Activated CD4-positive, alpha-beta memory T cell treated with anti-CD3 and anti-CD28 coated beads for 36 hours (primary cell): ENCODE measurements at regions of chr7 and their contacts with region 1.

Region 1: GRCh38 chr7:150514748-150515222 is at the start of gene GIMAP7:
- DNase-seq: peak; percentile 73
- H3K4me3 Mint-ChIP-seq: peak within 1 kb of the TSS; percentile 94
- H3K27ac Mint-ChIP-seq: peak within 1 kb of the TSS; percentile 97
- H3K4me1 Mint-ChIP-seq: peaks cover 52% of the 10 kb centered on the region
- H3K27me3 Mint-ChIP-seq: no peaks in the 10 kb centered on the region
- total RNA-seq, gene GIMAP7: 42.5 to 44.1 TPM

Region 2: DNA sequence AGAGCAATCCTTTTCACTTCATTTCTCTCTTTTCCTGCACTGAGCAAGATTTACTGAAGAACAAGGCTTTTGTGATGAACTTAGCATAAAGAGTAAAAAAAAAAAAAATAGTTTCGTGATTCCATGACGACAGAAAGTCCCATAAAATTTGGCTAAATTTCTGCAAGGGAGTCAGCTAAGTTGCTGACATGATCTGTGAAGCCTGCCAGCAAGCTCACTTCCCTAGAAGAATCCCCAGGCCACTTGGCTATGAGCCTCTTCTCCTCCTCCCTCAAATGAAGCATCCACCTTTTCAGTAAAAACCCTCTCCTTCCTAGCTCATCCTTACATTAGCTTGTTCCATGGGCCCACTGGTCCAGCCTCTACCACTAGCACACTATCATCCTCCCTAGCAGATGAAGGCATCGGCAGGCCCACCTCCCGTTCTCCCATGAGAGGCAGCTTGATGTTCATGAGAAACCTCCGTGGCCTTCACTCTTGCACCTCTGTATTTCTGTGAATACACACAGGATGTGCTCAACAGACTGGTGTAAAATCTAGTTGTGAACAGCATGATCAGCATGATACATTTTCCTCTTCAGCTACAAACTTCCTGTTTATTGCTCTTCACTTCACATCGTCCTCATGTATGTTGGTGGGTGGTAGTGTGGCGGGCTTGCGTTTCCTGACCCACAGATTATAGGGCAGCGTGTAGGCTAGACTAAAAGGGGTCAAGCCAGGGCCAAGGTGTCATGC is 33.4 kb before region 1 on chr7:
- CTCF ChIA-PET with region 1: interaction called, 5 read pairs
- POLR2A ChIA-PET with region 1: interaction called, 13 read pairs
- intact Hi-C with region 1: loop called (anchors 5 kb)
- DNase-seq: peak; percentile 63
- H3K4me3 Mint-ChIP-seq: peak overlapping the region; percentile 83
- H3K27ac Mint-ChIP-seq: peak overlapping the region; percentile 99
- H3K4me1 Mint-ChIP-seq: peaks cover 94% of the 10 kb centered on the region
- H3K27me3 Mint-ChIP-seq: no peaks in the 10 kb centered on the region

Region 3: GRCh38 chr7:150538259-150538658 is 23.5 kb after region 1 on chr7:
- CTCF ChIA-PET with region 1: no interaction called
- POLR2A ChIA-PET with region 1: no interaction called
- intact Hi-C with region 1: no loop called
- DNase-seq: no peak
- H3K4me3 Mint-ChIP-seq: no peak overlapping the region
- H3K27ac Mint-ChIP-seq: no peak overlapping the region
- H3K4me1 Mint-ChIP-seq: peaks cover 5% of the 10 kb centered on the region
- H3K27me3 Mint-ChIP-seq: no peaks in the 10 kb centered on the region

Region 4: DNA sequence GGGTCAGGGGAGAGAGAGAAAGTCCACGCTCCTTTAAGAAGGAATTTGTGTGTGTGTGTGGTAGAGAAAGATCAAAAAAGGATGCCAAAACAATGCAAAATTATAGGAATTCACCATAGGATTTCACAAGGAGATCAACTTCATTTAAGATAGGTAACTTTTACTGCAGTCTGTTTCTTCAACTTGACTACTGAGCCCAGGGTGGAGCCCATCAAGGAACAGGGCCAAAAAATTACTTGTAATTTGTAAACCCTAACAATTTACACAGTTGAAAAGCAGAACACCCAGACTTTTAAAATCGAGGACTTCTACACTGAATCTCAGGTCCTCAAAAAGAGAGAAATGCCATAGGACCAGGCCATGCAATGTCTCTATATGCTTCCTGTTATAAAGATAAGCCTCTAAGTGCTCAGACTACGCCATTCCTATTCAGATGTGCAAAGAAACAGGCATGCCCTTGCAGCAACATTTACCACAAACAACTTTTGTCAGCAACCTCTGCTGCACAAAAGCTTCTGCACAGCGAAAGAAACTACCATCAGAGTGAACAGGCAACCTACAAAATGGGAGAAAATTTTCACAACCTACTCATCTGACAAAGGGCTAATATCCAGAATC is 41.8 kb after region 1 on chr7:
- CTCF ChIA-PET with region 1: interaction called, 3 read pairs
- POLR2A ChIA-PET with region 1: interaction called, 5 read pairs
- intact Hi-C with region 1: loop called (anchors 2 kb)
- DNase-seq: no peak
- H3K4me3 Mint-ChIP-seq: peak overlapping the region; percentile 58
- H3K27ac Mint-ChIP-seq: peak overlapping the region; percentile 83
- H3K4me1 Mint-ChIP-seq: peaks cover 78% of the 10 kb centered on the region
- H3K27me3 Mint-ChIP-seq: no peaks in the 10 kb centered on the region

Region 5: GRCh38 chr7:150631866-150632864 is 117.4 kb after region 1 on chr7 and contains the start of gene GIMAP6:
- CTCF ChIA-PET with region 1: interaction called, 4 read pairs
- POLR2A ChIA-PET with region 1: interaction called, 5 read pairs
- intact Hi-C with region 1: loop called (anchors 5 kb)
- DNase-seq: peak; percentile 62
- H3K4me3 Mint-ChIP-seq: peak within 1 kb of the TSS; percentile 93
- H3K27ac Mint-ChIP-seq: peak within 1 kb of the TSS; percentile 97
- H3K4me1 Mint-ChIP-seq: peaks cover 76% of the 10 kb centered on the region
- H3K27me3 Mint-ChIP-seq: no peaks in the 10 kb centered on the region
- total RNA-seq, gene GIMAP6: 28.9 to 30.2 TPM

Region 6: DNA sequence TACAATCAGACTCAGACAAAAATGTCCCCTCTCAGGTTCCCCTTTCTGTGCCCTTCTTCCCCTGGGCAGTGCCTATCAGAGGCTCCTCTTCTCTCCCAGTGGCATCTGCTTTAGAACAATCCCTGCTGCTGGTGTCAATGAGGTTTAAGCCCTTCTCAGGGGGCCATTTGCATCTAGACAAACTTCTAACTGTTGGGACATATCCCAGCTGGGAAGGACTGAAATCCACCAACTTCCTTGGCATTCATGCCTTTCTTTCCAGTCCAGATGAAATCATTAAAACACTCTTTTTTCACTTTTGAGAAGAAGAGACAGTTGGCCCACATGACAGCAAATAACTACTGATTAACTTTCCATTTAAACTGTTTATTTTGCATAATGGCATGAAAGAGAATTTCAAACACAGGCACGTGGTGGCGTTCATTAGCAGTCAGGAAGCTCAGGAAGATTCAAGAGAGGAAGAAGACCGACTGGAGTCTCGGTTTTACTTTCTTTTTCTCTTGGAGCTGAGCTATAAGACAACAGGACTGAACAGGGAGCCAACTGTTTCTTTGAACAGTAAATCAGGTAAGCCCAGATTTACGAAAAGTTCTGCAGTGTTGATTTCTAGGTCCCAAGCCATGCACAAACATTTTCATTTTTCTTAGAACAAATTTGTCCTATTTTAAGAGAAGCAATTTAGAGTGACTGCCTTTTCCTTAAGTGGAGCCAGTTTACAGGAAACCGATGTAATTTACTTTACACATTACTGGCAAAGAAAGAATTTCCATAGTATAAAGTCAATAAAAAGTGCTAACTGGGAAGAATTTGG is 170.6 kb after region 1 on chr7 and contains the start of gene GIMAP2:
- CTCF ChIA-PET with region 1: no interaction called
- POLR2A ChIA-PET with region 1: interaction called, 4 read pairs
- intact Hi-C with region 1: loop called (anchors 2 kb)
- DNase-seq: peak; percentile 40
- H3K4me3 Mint-ChIP-seq: peak within 1 kb of the TSS; percentile 98
- H3K27ac Mint-ChIP-seq: peak within 1 kb of the TSS; percentile 99
- H3K4me1 Mint-ChIP-seq: peaks cover 77% of the 10 kb centered on the region
- H3K27me3 Mint-ChIP-seq: no peaks in the 10 kb centered on the region
- total RNA-seq, gene GIMAP2: 38.8 to 44.1 TPM

Region 7: GRCh38 chr7:150737265-150738055 is 222.7 kb after region 1 on chr7 and contains the start of gene GIMAP5:
- CTCF ChIA-PET with region 1: interaction called, 4 read pairs
- POLR2A ChIA-PET with region 1: interaction called, 14 read pairs
- intact Hi-C with region 1: loop called (anchors 2 kb)
- DNase-seq: peak; percentile 77
- H3K4me3 Mint-ChIP-seq: peak within 1 kb of the TSS; percentile 87
- H3K27ac Mint-ChIP-seq: peak within 1 kb of the TSS; percentile 97
- H3K4me1 Mint-ChIP-seq: peaks cover 72% of the 10 kb centered on the region
- H3K27me3 Mint-ChIP-seq: no peaks in the 10 kb centered on the region
- total RNA-seq, gene GIMAP5: 45.9 to 48.3 TPM

Region 8: DNA sequence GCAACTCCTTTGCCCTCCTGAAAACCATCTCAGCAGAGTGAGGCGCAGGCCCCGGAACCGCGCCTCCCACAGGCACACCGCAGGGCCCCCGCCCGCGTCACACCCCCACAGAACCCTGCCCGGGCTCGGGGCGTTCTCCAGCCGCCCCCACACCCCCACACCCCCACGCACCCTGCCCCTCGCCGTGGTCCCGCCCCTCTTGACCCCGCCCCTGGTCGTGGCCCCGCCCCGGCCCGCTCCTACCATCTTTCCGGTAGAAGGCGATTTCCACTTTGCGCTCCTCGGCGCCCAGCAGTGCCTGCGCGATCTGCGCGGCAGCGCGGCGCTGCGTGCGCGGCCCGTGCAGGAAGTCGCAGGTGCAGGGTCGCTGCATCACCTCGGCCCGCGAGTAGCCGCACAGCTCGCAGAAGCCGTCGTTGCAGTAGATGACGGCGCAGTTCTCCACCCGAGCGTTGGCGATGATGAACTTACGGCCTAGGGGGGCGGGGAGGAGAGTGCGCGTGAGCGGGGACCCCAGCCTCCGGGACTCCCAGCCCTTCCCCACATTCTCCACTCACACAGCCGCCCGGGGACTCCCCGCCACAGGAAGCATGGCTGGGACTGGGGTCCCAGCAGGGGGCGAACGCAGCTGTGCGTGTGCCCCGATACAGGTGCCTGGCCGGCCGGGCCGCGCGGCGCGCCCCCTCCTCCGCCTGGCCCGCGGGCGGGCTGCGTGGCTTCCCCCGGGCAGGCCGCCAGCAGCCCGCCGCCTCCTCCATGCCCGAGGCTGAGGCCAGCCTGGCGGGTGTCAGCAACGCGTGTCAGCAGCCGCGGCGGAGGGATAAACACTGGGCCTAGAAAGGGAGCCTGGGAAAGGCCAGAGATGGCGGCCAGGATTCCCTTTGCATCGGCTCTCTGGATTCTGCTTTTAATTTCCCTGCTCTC is 459.9 kb after region 1 on chr7:
- CTCF ChIA-PET with region 1: no interaction called
- POLR2A ChIA-PET with region 1: no interaction called
- intact Hi-C with region 1: no loop called
- DNase-seq: peak; percentile 83
- H3K4me3 Mint-ChIP-seq: peak overlapping the region; percentile 83
- H3K27ac Mint-ChIP-seq: peak overlapping the region; percentile 77
- H3K4me1 Mint-ChIP-seq: peaks cover 23% of the 10 kb centered on the region
- H3K27me3 Mint-ChIP-seq: peaks cover 21% of the 10 kb centered on the region